ENCODE measurements at regions of chr1 and their contacts with region 1.

Region 1: GRCh38 chr1:162422662-162423375 is 10.9 kb upstream of the SH2D1B start:
- DNase-seq: no peak
- ATAC-seq: no peak
- H3K4me3 ChIP-seq: no peak overlapping the region
- H3K27ac ChIP-seq: no peak overlapping the region
- H3K4me1 ChIP-seq: no peaks in the 10 kb centered on the region; the same call in 1 of the 2 replicates
- H3K27me3 ChIP-seq: no peaks in the 10 kb centered on the region
- CTCF ChIP-seq: no peak
- POLR2A ChIP-seq: no peak
- RAD21 ChIP-seq: no peak

Region 2: DNA sequence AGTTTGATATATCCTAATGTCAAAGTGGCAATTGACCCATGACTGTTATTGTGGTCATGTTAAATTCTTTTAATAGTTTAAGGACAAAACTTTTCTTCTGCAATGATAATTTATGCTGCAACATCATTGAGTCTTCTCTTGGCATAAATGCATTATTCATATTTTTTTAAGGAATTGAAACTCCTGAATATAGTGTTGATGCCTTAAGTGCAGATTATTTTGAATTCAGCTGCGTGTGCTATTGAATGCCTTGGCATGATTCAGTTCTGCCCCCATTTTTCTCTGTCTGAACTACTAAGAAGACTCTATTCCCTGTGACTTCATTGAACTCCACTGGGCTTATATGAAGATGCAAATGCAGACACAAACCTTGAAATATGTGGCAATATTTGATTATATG is 375.9 kb before region 1 on chr1:
- CTCF ChIA-PET with region 1: no interaction called
- POLR2A ChIA-PET with region 1: no interaction called
- dilution Hi-C with region 1: no loop called
- in situ Hi-C with region 1: no loop called
- intact Hi-C with region 1: no loop called
- DNase-seq: no peak
- ATAC-seq: no peak
- H3K4me3 ChIP-seq: no peak overlapping the region
- H3K27ac ChIP-seq: no peak overlapping the region
- H3K4me1 ChIP-seq: no peaks in the 10 kb centered on the region
- H3K27me3 ChIP-seq: peaks cover 6% of the 10 kb centered on the region
- CTCF ChIP-seq: no peak
- POLR2A ChIP-seq: no peak
- RAD21 ChIP-seq: no peak

Region 3: DNA sequence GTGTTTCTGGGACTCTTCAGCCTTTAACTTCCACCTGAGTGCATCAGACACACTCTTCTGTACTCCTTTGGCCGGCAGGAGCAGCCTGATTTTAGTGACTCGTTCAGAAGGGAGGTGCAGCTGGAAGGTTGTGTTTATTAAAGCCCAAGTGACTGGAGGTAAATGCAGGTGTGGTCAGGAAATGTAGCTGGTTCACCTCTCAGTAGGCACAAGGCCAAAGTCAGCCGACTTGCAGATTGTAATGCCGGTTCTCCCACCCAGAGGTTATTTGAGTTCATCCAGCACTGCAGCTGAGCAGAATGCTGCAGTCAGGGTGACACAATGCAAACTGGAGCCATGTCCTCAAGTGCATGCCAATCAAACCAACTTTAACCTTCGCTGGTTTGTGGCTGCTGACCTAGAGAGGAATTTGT is 137.7 kb before region 1 on chr1:
- CTCF ChIA-PET with region 1: no interaction called
- POLR2A ChIA-PET with region 1: no interaction called
- dilution Hi-C with region 1: no loop called
- in situ Hi-C with region 1: no loop called
- intact Hi-C with region 1: no loop called
- DNase-seq: no peak
- ATAC-seq: no peak
- H3K4me3 ChIP-seq: no peak overlapping the region
- H3K27ac ChIP-seq: no peak overlapping the region
- H3K4me1 ChIP-seq: no peaks in the 10 kb centered on the region
- H3K27me3 ChIP-seq: peaks cover 23% of the 10 kb centered on the region
- CTCF ChIP-seq: no peak
- POLR2A ChIP-seq: no peak
- RAD21 ChIP-seq: no peak

Region 4: GRCh38 chr1:162391790-162392563 is 30.8 kb before region 1 on chr1:
- CTCF ChIA-PET with region 1: no interaction called
- POLR2A ChIA-PET with region 1: no interaction called
- dilution Hi-C with region 1: no loop called
- in situ Hi-C with region 1: no loop called
- intact Hi-C with region 1: loop called (anchors 2 kb)
- DNase-seq: peak; percentile 58
- ATAC-seq: peak; percentile 93
- H3K4me3 ChIP-seq: no peak overlapping the region
- H3K27ac ChIP-seq: no peak overlapping the region
- H3K4me1 ChIP-seq: no peaks in the 10 kb centered on the region
- H3K27me3 ChIP-seq: peaks cover 27% of the 10 kb centered on the region
- CTCF ChIP-seq: peak; percentile 77
- POLR2A ChIP-seq: no peak
- RAD21 ChIP-seq: peak; percentile 70

Region 5: GRCh38 chr1:162404550-162405160 is 18.2 kb before region 1 on chr1:
- CTCF ChIA-PET with region 1: no interaction called
- POLR2A ChIA-PET with region 1: no interaction called
- dilution Hi-C with region 1: no loop called
- in situ Hi-C with region 1: no loop called
- intact Hi-C with region 1: no loop called
- DNase-seq: peak; percentile 86
- ATAC-seq: peak; percentile 91
- H3K4me3 ChIP-seq: no peak overlapping the region
- H3K27ac ChIP-seq: no peak overlapping the region
- H3K4me1 ChIP-seq: no peaks in the 10 kb centered on the region; the same call in 1 of the 2 replicates
- H3K27me3 ChIP-seq: peaks cover 2% of the 10 kb centered on the region; the same call in 1 of the 2 replicates
- CTCF ChIP-seq: no peak
- POLR2A ChIP-seq: no peak
- RAD21 ChIP-seq: no peak

Region 6: DNA sequence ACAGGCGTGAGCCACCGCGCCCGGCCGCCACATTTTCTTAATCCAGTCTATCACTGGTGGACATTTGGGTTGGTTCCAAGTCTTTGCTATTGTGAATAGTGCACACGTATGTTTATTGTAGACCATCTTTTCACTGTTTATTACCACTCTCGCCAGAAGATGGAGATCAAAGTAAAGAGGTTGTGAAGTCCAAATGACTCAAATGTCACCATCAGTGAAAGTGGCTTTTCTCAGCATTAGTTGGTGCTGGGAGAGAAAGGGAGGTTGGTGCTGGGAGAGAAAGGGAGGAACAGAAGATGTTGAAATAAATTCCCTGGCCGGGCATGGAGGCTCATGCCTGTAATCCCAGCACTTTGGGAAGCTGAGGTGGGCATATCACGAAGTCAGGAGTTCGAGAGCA is 64.4 kb after region 1 on chr1:
- CTCF ChIA-PET with region 1: no interaction called
- POLR2A ChIA-PET with region 1: no interaction called
- dilution Hi-C with region 1: no loop called
- in situ Hi-C with region 1: no loop called
- intact Hi-C with region 1: loop called (anchors 1 kb)
- DNase-seq: no peak
- ATAC-seq: no peak
- H3K4me3 ChIP-seq: no peak overlapping the region
- H3K27ac ChIP-seq: no peak overlapping the region
- H3K4me1 ChIP-seq: no peaks in the 10 kb centered on the region
- H3K27me3 ChIP-seq: peaks cover 5% of the 10 kb centered on the region; the same call in 1 of the 2 replicates
- CTCF ChIP-seq: no peak
- POLR2A ChIP-seq: no peak
- RAD21 ChIP-seq: no peak

Measured in IMR-90 (cell line).